Sigmoid colon (tissue), 7 donors: ENCODE measurements at regions of chr10 and their contacts with region 1.

Region 1: GRCh38 chr10:86682667-86683066 is 14.4 kb downstream of the LDB3 start:
- DNase-seq: no peak
- H3K4me3 ChIP-seq: no peak overlapping the region
- H3K27ac ChIP-seq: peak overlapping the region; percentile 88 to 95 (median 92)
- H3K4me1 ChIP-seq: peaks cover 0 to 88% (median 74%) of the 10 kb centered on the region in 4 donors
- H3K27me3 ChIP-seq: no peaks in the 10 kb centered on the region
- CTCF ChIP-seq: no peak
- EP300 ChIP-seq: no peak
- POLR2A ChIP-seq: no peak

Region 2: DNA sequence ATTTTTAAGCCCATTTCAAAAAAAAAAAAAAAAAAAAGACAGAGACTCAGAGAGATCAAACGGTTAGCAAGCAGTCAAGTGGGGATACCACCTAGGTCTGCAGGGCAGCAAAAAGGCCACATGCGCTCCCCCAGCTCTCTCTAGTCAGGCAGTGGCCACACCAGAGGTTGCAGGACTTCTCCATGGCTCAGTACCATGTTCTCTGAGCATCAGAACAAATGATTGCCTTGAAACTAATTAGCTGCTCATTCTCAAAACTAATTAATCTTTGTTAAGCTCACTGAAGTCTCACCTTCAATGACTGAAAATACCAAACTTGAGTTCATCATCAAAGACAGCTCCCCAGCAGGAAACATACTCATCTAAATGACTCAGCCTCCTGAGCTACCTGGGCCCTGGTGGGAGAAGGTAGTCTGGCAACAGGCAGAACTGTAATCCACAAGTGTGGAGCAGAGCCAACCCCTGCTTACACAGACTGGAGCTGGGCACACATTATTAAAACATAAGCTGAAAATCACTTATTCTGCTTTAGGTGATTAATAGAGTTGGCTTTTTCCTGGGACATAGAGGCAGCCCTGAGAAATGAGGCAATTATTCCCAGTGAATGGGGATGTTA is 635.7 kb before region 1 on chr10:
- intact Hi-C with region 1: no loop called
- DNase-seq: peak; percentile 6
- H3K4me3 ChIP-seq: no peak overlapping the region
- H3K27ac ChIP-seq: no peak overlapping the region
- H3K4me1 ChIP-seq: no peaks in the 10 kb centered on the region
- H3K27me3 ChIP-seq: no peaks in the 10 kb centered on the region
- CTCF ChIP-seq: no peak
- EP300 ChIP-seq: no peak
- POLR2A ChIP-seq: no peak

Region 3: GRCh38 chr10:86642499-86642898 is 40.2 kb before region 1 on chr10:
- intact Hi-C with region 1: loop called (anchors 2 kb)
- DNase-seq: no peak
- H3K4me3 ChIP-seq: no peak overlapping the region
- H3K27ac ChIP-seq: no peak overlapping the region
- H3K4me1 ChIP-seq: peaks cover 0 to 17% (median 0%) of the 10 kb centered on the region in 4 donors
- H3K27me3 ChIP-seq: no peaks in the 10 kb centered on the region
- CTCF ChIP-seq: no peak
- EP300 ChIP-seq: no peak
- POLR2A ChIP-seq: no peak

Region 4: GRCh38 chr10:86652361-86653202 is 30.1 kb before region 1 on chr10:
- intact Hi-C with region 1: no loop called
- DNase-seq: peak; percentile 53
- H3K4me3 ChIP-seq: no peak overlapping the region
- H3K27ac ChIP-seq: no peak overlapping the region
- H3K4me1 ChIP-seq: peaks cover 0 to 22% (median 17%) of the 10 kb centered on the region in 4 donors
- H3K27me3 ChIP-seq: no peaks in the 10 kb centered on the region
- CTCF ChIP-seq: no peak
- EP300 ChIP-seq: no peak
- POLR2A ChIP-seq: no peak

Region 5: DNA sequence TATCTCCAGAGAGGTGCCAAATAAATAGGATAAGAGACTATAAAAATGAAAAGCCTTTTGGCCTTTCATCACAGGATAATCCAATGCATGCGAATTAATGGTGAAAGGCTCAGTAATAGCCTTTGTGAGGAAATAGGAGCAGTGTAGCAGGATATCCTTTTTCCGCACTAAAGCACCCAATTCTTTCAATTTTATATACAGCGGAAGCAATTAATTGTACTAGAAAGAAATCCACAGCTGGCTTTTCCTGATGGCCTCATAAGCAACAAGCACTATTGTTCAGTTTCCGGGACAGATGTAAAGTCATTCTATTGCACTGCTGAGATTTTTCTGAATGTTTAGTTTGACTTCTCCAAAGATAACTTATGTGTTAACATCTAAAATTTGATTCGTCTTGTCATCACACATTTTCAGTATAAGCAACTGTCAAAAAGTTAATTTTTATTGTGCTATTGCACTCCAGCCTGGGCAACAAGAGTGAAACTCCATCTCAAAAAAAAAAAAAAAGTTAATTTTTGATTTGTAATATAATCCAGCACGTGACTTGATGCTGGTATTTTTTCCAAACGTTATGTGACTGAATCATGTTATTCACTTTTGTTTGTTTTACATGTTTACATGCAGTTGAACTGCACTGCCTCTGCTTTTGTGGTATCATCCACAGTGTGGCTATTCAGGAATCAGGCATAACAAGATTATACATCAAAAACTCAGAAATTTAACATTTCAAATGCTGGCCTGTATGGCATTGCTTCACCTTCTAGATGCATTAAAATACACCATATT is 65.3 kb after region 1 on chr10:
- intact Hi-C with region 1: no loop called
- DNase-seq: no peak
- H3K4me3 ChIP-seq: no peak overlapping the region
- H3K27ac ChIP-seq: peak overlapping the region; percentile 16 to 46 (median 36)
- H3K4me1 ChIP-seq: peaks cover 0 to 44% (median 27%) of the 10 kb centered on the region in 4 donors
- H3K27me3 ChIP-seq: no peaks in the 10 kb centered on the region
- CTCF ChIP-seq: no peak
- EP300 ChIP-seq: no peak
- POLR2A ChIP-seq: no peak